ENCODE measurements at regions of chr5 and their contacts with region 1.

Region 1: GRCh38 chr5:157682257-157682656 is 10.9 kb downstream of the C5orf52 start:
- DNase-seq: no peak
- ATAC-seq: no peak
- H3K4me3 ChIP-seq: no peak overlapping the region
- H3K4me3 Mint-ChIP-seq: no peak overlapping the region
- H3K27ac ChIP-seq: no peak overlapping the region
- H3K27ac Mint-ChIP-seq: no peak overlapping the region
- H3K4me1 ChIP-seq: no peaks in the 10 kb centered on the region
- H3K4me1 Mint-ChIP-seq: no peaks in the 10 kb centered on the region
- H3K27me3 ChIP-seq: no peaks in the 10 kb centered on the region
- H3K27me3 Mint-ChIP-seq: no peaks in the 10 kb centered on the region

Region 2: DNA sequence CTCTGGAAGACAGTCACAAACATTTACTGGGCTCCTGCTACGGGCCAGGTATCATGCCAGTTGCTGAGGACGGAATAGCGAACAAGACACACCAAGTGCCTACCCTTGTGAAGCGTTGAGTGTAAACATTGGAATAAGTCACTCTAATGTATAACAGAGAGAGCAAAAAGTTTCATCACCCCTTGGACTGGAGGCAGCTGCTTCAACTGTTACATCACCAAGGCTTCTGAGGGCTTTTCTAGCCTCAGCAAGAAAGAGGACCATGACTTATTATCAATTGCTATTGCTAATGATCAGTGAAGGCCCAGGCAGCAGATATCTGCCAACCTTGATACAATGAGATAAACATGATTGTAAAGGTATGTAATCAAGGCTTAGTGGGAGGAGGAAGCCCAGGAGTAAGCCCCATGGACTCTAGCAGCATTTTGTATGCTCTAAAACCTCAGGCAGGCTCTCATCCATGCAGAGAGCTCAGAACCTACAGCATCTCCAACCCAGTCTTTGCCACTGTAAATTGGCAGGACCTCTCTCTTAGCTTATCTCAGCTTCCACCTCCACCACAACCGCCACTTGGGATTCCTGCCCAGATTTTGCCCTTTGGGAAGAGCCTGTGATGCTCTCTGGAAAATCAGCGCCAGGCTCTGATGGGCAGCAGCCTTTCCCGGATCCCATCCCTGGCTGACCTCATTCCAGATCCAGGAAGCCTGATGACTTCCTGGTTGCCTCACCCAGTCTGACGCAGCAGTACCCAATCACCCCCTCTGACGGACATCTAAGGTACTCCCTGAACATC is 161.2 kb before region 1 on chr5:
- CTCF ChIA-PET with region 1: interaction called in 1 of 2 experiments, 12 read pairs
- POLR2A ChIA-PET with region 1: no interaction called
- DNase-seq: no peak
- ATAC-seq: no peak
- H3K4me3 ChIP-seq: no peak overlapping the region
- H3K4me3 Mint-ChIP-seq: no peak overlapping the region
- H3K27ac ChIP-seq: no peak overlapping the region
- H3K27ac Mint-ChIP-seq: peak overlapping the region; percentile 51 to 52
- H3K4me1 ChIP-seq: no peaks in the 10 kb centered on the region
- H3K4me1 Mint-ChIP-seq: peaks cover 0 to 33% (median 7%) of the 10 kb centered on the region in 3 donors
- H3K27me3 ChIP-seq: peaks cover 0 to 3% of the 10 kb centered on the region in 2 experiments
- H3K27me3 Mint-ChIP-seq: no peaks in the 10 kb centered on the region

Region 3: GRCh38 chr5:157548513-157549297 is 133.6 kb before region 1 on chr5:
- CTCF ChIA-PET with region 1: no interaction called
- POLR2A ChIA-PET with region 1: no interaction called
- DNase-seq: no peak
- ATAC-seq: no peak
- H3K4me3 ChIP-seq: no peak overlapping the region
- H3K4me3 Mint-ChIP-seq: peak overlapping the region in 2 of 3 donors; percentile 32 to 41
- H3K27ac ChIP-seq: peak overlapping the region; percentile 33
- H3K27ac Mint-ChIP-seq: peak overlapping the region; percentile 91
- H3K4me1 ChIP-seq: peaks cover 10 to 53% of the 10 kb centered on the region in 2 experiments
- H3K4me1 Mint-ChIP-seq: peaks cover 50 to 90% (median 83%) of the 10 kb centered on the region in 3 donors
- H3K27me3 ChIP-seq: no peaks in the 10 kb centered on the region
- H3K27me3 Mint-ChIP-seq: no peaks in the 10 kb centered on the region

Region 4: GRCh38 chr5:157799578-157799977 is 117.3 kb after region 1 on chr5:
- CTCF ChIA-PET with region 1: no interaction called
- POLR2A ChIA-PET with region 1: interaction called in 1 of 2 experiments, 11 read pairs
- DNase-seq: no peak
- ATAC-seq: no peak
- H3K4me3 ChIP-seq: no peak overlapping the region
- H3K4me3 Mint-ChIP-seq: no peak overlapping the region
- H3K27ac ChIP-seq: no peak overlapping the region
- H3K27ac Mint-ChIP-seq: no peak overlapping the region
- H3K4me1 ChIP-seq: no peaks in the 10 kb centered on the region
- H3K4me1 Mint-ChIP-seq: no peaks in the 10 kb centered on the region
- H3K27me3 ChIP-seq: no peaks in the 10 kb centered on the region
- H3K27me3 Mint-ChIP-seq: no peaks in the 10 kb centered on the region